Panc1 (cell line): ENCODE measurements at regions of chr2 and their contacts with region 1.

Region 1: GRCh38 chr2:85595301-85596025 is at the start of gene RNF181:
- DNase-seq: peak; percentile 95
- ATAC-seq: peak; percentile 98
- H3K4me3 ChIP-seq: peak within 1 kb of the TSS; percentile 91 to 99
- H3K27ac ChIP-seq: peak within 1 kb of the TSS; percentile 96
- H3K4me1 ChIP-seq: peaks cover 31% of the 10 kb centered on the region
- H3K27me3 ChIP-seq: no peaks in the 10 kb centered on the region
- CTCF ChIP-seq: no peak
- total RNA-seq, gene RNF181: 156 TPM

Region 2: GRCh38 chr2:85376291-85377065 is 219.0 kb before region 1 on chr2:
- CTCF ChIA-PET with region 1: no interaction called
- POLR2A ChIA-PET with region 1: no interaction called
- in situ Hi-C with region 1: no loop called
- intact Hi-C with region 1: no loop called
- DNase-seq: no peak
- ATAC-seq: no peak
- H3K4me3 ChIP-seq: no peak overlapping the region
- H3K27ac ChIP-seq: no peak overlapping the region
- H3K4me1 ChIP-seq: no peaks in the 10 kb centered on the region
- H3K27me3 ChIP-seq: no peaks in the 10 kb centered on the region
- CTCF ChIP-seq: no peak

Region 3: DNA sequence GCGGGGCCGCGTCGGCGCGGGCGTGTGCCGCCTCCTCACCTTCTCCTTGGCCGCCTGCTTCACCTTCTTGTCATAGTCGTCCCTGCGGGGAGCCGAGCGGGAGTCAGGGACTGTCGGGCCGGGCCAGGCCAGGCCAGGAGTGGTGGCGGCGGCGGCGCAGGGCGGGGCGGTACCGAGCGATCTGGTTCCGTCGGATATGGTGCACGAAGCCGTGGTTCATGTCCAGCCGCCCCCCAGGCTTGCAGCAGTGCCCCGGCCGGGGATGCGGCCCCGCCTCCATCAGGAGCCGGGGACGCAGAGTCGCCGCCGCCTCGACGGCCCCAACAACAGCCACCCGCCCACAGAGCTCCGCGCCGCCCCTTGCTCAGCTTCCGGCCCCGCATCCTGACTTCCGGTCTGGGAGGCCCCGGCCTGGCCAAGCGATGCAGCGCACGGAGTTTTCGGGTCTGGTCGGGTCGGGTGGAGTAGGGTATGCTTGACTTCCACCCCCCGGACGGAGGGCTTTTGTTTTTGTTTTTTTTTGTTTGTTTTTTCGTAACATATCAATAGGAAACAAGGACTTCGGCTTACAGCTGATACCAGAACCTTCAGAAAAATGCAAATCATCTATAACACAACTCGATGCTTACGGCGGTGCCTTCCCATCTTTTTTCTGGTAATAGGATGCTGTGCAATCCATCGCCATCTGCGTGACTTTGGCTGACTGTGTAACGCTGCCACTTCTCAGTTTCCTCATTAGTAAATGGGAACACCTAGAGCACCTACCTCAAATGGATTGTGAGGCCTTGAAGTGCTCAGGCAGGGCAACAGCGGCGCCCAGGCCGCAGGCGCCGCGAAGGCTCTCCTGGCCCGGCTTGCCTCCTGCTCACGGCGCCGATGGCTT is 16.5 kb after region 1 on chr2 and contains the start of gene C2orf68:
- CTCF ChIA-PET with region 1: no interaction called
- POLR2A ChIA-PET with region 1: interaction called, 14 read pairs
- in situ Hi-C with region 1: no loop called
- intact Hi-C with region 1: no loop called
- DNase-seq: peak; percentile 65
- ATAC-seq: peak; percentile 93
- H3K4me3 ChIP-seq: peak within 1 kb of the TSS; percentile 68 to 76
- H3K27ac ChIP-seq: peak within 1 kb of the TSS; percentile 92
- H3K4me1 ChIP-seq: no peaks in the 10 kb centered on the region; the same call in 1 of the 2 replicates
- H3K27me3 ChIP-seq: no peaks in the 10 kb centered on the region
- CTCF ChIP-seq: no peak
- total RNA-seq, gene C2orf68: 23.7 TPM

Region 4: DNA sequence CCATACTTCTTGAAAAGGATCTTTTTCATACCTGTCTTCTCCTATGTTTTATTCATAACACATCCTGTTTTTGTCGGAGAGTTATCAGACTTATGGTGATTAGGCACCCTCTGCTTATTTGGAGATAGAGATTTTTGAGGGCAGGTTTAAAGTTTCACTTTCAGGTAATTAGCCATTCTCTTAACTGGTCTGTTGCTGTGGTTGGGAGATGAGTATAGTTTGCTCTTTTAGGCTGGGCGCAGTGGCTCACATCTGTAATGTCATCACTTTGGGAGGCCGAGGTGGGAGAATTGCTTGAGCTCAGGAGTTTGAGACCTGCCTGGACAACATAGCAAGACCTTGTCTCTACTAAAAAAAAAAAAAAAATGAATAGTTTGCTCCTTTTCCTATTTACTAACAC is 47.3 kb after region 1 on chr2:
- CTCF ChIA-PET with region 1: no interaction called
- POLR2A ChIA-PET with region 1: interaction called, 16 read pairs
- in situ Hi-C with region 1: no loop called
- intact Hi-C with region 1: no loop called
- DNase-seq: no peak
- ATAC-seq: no peak
- H3K4me3 ChIP-seq: no peak overlapping the region
- H3K27ac ChIP-seq: no peak overlapping the region
- H3K4me1 ChIP-seq: no peaks in the 10 kb centered on the region
- H3K27me3 ChIP-seq: no peaks in the 10 kb centered on the region
- CTCF ChIP-seq: no peak

Region 5: GRCh38 chr2:85769236-85769984 is 173.9 kb after region 1 on chr2:
- CTCF ChIA-PET with region 1: no interaction called
- POLR2A ChIA-PET with region 1: interaction called, 12 read pairs
- in situ Hi-C with region 1: no loop called
- intact Hi-C with region 1: no loop called
- DNase-seq: no peak
- ATAC-seq: peak; percentile 21; the same call in 1 of the 2 replicates
- H3K4me3 ChIP-seq: no peak overlapping the region
- H3K27ac ChIP-seq: peak overlapping the region; percentile 82
- H3K4me1 ChIP-seq: peaks cover 88% of the 10 kb centered on the region
- H3K27me3 ChIP-seq: no peaks in the 10 kb centered on the region
- CTCF ChIP-seq: no peak; the same call in 1 of the 2 replicates